Dendritic cell treated with granulocyte-macrophage colony-stimulating factor and Interleukin-4, amounts not matched to agents 40 ng/mL and 50 ng/mL, for 4 days (primary cell): ENCODE measurements at regions of chr16 and their contacts with region 1.

Region 1: DNA sequence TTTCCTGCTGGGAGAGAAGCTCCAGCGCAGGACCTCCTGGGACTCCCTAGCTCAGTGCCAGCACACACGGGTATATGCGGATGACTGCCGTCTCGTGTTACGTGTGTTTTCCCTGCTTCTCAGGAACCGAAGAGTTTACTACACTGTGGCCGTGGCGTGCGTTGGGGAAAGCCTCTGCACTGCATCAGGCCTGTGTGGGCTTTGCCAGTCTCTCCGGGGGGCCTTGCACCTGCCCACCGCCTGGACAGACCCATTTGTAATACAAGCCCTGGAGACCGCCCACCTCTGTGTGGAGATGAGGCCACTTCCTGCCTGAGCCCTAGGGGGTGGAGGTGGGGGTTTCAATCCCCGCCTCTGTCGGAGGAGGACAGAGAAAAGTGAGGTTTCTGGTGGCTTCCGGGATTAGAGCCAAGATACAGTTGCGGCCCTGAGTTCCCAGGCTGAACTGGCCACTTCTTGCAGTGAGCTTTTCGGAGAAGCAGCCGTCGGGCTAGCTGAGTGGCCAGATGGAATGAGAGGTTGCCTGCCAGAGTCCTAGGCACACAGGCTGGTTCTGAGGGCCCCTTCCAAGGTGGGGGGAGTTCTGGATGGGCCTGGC is 43.4 kb upstream of the GSE1 start:
- H3K4me3 Mint-ChIP-seq: peak overlapping the region; percentile 39
- H3K27ac Mint-ChIP-seq: peak overlapping the region; percentile 97
- H3K4me1 Mint-ChIP-seq: peaks cover 97% of the 10 kb centered on the region
- H3K27me3 Mint-ChIP-seq: peaks cover 4% of the 10 kb centered on the region

Region 2: DNA sequence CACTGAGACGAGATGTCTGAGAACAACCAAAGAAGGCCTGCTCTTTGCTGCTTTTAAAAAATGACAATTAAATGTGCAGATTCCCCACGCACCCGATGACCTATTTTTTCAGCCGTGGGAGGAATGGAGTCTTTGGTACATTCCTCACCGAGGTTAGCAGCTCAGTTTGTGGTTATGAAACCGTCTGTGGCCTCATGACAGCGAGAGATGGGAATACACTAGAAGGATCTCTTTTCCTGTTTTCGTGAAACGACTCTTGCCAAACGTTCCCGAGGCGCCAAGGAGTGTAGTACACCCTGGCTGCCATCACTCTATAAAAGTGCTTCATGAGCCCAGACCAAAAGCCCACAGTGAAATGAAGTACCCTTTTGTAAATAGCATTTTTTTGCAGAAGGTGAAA is 662.1 kb before region 1 on chr16:
- intact Hi-C with region 1: no loop called
- H3K4me3 Mint-ChIP-seq: no peak overlapping the region
- H3K27ac Mint-ChIP-seq: peak overlapping the region; percentile 23
- H3K4me1 Mint-ChIP-seq: peaks cover 53% of the 10 kb centered on the region
- H3K27me3 Mint-ChIP-seq: peaks cover 4% of the 10 kb centered on the region

Region 3: DNA sequence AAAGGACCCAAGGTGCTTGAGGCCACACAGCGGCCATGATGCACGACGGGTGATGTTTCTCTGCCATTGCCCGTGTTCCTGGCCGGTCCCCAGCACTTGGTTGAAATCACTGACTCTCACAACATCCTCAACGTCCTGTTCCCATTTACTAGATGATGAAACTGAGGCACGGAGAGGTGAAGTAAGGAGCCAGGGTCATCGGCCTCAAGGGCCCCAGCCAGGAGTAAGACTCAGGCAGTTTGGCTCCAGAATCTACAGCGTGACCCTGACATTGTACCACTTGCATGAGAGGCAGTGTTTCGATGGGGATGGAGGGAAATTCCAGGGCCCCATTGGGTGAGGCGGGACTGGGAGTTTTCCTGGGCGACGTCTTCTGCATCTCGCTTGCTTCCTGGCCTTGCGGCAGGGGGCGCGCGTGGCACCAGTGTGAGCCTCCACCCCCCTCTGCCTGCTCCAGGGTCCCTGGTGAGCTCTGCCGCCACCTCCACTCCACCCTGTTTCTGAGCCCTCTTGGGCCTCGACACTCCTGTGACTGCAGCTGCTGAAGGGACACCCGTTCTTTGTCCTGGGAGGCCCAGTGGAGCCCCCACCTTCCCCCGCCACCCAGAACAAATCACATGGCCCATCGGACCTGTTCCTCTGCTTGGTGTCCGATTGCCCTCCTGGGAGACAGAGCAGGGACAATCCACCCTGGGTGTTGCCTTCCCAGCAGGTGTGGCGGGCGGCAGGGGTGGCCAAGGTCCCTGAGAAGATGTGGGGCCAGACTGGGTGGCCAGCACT is 89.6 kb before region 1 on chr16:
- intact Hi-C with region 1: loop called (anchors 5 kb)
- H3K4me3 Mint-ChIP-seq: no peak overlapping the region
- H3K27ac Mint-ChIP-seq: no peak overlapping the region
- H3K4me1 Mint-ChIP-seq: no peaks in the 10 kb centered on the region
- H3K27me3 Mint-ChIP-seq: peaks cover 10% of the 10 kb centered on the region

Region 4: GRCh38 chr16:85686912-85687591 is 117.3 kb after region 1 on chr16:
- intact Hi-C with region 1: no loop called
- H3K4me3 Mint-ChIP-seq: no peak overlapping the region
- H3K27ac Mint-ChIP-seq: no peak overlapping the region
- H3K4me1 Mint-ChIP-seq: peaks cover 7% of the 10 kb centered on the region
- H3K27me3 Mint-ChIP-seq: peaks cover 9% of the 10 kb centered on the region